ENCODE measurements at regions of chrX and their contacts with region 1.

Region 1: GRCh38 chrX:66408507-66408906 is 230.4 kb downstream of the EDA2R start:
- DNase-seq: peak; percentile 11
- ATAC-seq: peak; percentile 79
- H3K4me3 ChIP-seq: no peak overlapping the region
- H3K27ac ChIP-seq: no peak overlapping the region
- H3K4me1 ChIP-seq: no peaks in the 10 kb centered on the region
- H3K27me3 ChIP-seq: no peaks in the 10 kb centered on the region
- CTCF ChIP-seq: peak; percentile 46 to 56 (median 49); a peak in 4 of 6 replicates
- EP300 ChIP-seq: no peak
- POLR2A ChIP-seq: no peak
- RAD21 ChIP-seq: peak; percentile 57

Region 2: GRCh38 chrX:66004928-66005829 is 403.3 kb before region 1 on chrX:
- CTCF ChIA-PET with region 1: interaction called, 3 read pairs
- POLR2A ChIA-PET with region 1: no interaction called
- RAD21 ChIA-PET with region 1: no interaction called
- SMC1A ChIA-PET with region 1: no interaction called
- in situ Hi-C with region 1: loop called (anchors 10 kb)
- intact Hi-C with region 1: loop called (anchors 10 kb)
- DNase-seq: no peak
- ATAC-seq: no peak
- H3K4me3 ChIP-seq: no peak overlapping the region
- H3K27ac ChIP-seq: no peak overlapping the region
- H3K4me1 ChIP-seq: peaks cover 11% of the 10 kb centered on the region
- H3K27me3 ChIP-seq: no peaks in the 10 kb centered on the region
- CTCF ChIP-seq: no peak
- EP300 ChIP-seq: no peak
- POLR2A ChIP-seq: no peak
- RAD21 ChIP-seq: no peak

Region 3: DNA sequence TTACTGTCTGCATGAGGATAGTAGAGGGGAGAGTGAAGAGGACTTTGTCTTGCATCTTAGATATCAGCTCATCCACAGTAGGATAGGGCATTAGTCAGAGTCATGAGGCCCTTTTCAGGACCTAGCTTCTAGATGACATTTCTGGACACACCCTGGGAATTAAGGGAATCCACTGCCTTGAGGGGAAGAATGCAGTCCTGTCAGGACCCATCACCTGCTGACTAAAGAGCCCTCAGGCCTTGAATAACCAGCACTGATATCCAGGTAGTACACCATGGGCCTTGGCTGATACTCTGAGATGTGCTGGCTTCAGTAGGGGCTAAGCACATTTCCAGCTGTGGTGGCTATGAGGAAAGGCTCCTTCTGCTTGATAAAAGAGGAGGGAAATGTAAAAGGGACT is 96.0 kb after region 1 on chrX:
- CTCF ChIA-PET with region 1: no interaction called
- POLR2A ChIA-PET with region 1: no interaction called
- RAD21 ChIA-PET with region 1: no interaction called
- SMC1A ChIA-PET with region 1: no interaction called
- in situ Hi-C with region 1: no loop called
- intact Hi-C with region 1: no loop called
- DNase-seq: no peak
- ATAC-seq: no peak
- H3K4me3 ChIP-seq: no peak overlapping the region
- H3K27ac ChIP-seq: no peak overlapping the region
- H3K4me1 ChIP-seq: no peaks in the 10 kb centered on the region
- H3K27me3 ChIP-seq: no peaks in the 10 kb centered on the region
- CTCF ChIP-seq: no peak
- EP300 ChIP-seq: no peak
- POLR2A ChIP-seq: no peak
- RAD21 ChIP-seq: no peak